Posterior vena cava (tissue), 2 donors: ENCODE measurements at regions of chr18 and their contacts with region 1.

Region 1: DNA sequence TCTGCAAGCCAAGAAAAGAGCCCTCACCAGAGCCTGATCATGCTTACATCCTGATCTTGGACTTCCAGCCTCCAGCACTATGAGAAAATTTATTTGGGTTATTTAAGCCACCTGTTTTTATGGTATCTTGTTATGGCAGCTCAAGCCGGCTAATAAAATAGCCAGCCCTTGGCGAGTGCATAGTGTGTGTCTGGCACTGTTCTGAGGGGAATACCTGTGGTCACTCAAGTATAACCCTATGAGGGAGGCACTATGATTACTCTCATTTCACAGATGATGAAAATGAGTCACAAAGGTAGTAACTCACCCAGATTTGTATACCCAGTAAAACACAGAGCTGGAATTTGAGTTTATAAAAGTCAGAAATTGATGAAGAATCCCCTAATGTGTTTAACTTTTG is 556.9 kb upstream of the SETBP1 start:
- DNase-seq: no peak

Region 2: DNA sequence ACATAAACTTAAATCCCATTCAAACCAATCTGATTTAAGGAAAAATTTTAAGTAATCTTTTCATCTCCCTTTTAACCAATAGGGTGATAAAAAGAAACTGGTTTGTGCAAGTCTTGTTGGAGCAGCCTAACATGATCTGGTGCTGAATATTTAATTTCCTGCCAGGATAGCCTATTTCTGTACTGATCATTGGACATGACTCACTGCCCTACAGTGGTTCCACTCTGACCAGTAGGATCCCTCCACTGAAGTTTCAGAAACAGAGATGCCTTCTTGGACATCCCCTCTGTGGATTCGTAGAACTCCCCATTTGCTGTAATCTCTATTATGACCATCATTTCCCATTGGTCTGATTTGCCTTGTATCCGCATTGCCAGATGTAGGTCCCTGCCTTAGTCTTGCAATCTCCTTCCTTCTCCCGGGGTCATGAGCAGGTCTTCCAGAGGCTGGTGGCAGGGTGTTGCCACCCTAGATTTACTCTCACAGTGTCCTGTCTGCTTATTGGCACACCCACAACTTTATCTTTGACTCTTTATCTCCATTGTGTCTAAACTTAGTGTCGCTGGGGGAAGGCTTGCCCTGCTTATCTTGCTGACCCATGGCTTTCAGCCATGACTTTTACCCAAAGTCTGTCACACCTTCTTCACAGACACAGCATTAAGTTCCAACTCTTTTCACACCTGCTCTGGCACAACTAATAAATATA is 544.7 kb after region 1 on chr18:
- intact Hi-C with region 1: loop called in 1 of 2 experiments (anchors 5 kb)
- DNase-seq: no peak

Region 3: GRCh38 chr18:45071956-45072355 is 948.2 kb after region 1 on chr18:
- intact Hi-C with region 1: loop called in 1 of 2 experiments (anchors 5 kb)
- DNase-seq: no peak